ENCODE measurements at regions of chr11 and their contacts with region 1.

Region 1: DNA sequence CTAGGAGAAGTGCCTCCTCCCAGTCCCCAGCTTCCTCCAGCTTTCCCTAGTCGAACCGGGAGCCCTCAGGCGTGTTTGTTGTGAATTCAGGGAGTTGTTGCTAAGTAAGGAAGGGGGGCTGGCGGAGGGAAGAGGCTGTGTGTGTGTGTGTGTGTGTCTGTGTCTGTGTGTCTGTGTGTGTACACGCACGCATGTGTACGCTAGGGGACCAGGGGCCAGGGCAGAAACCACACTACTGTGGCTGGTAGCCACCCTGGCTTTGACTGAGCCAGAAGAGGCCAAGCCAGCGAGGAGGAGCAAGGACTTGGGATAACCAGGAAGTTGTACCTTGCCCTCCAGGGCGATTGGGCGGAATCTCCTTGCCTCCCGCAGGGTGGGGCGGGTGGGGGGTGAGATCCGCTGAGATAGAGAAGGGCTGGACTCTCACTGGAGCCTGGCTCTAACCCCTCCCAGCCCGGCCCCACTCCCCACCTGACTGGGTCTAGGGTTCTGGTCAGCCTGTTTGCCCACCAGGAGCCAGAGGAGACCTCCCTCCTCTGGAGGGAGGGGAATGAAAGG is 7.5 kb downstream of the BCL9L start:
- DNase-seq: peak; percentile 79 to 97
- H3K4me3 ChIP-seq: peak overlapping the region; percentile 54
- H3K27ac ChIP-seq: peak overlapping the region; percentile 96
- H3K4me1 ChIP-seq: peaks cover 77% of the 10 kb centered on the region
- H3K27me3 ChIP-seq: no peaks in the 10 kb centered on the region
- CTCF ChIP-seq: no peak

Region 2: GRCh38 chr11:118892536-118892936 is 25.7 kb before region 1 on chr11:
- CTCF ChIA-PET with region 1: no interaction called
- POLR2A ChIA-PET with region 1: interaction called, 36 read pairs
- intact Hi-C with region 1: no loop called
- DNase-seq: peak; percentile 28 to 54
- H3K4me3 ChIP-seq: no peak overlapping the region
- H3K27ac ChIP-seq: no peak overlapping the region
- H3K4me1 ChIP-seq: peaks cover 22% of the 10 kb centered on the region
- H3K27me3 ChIP-seq: no peaks in the 10 kb centered on the region
- CTCF ChIP-seq: no peak

Region 3: DNA sequence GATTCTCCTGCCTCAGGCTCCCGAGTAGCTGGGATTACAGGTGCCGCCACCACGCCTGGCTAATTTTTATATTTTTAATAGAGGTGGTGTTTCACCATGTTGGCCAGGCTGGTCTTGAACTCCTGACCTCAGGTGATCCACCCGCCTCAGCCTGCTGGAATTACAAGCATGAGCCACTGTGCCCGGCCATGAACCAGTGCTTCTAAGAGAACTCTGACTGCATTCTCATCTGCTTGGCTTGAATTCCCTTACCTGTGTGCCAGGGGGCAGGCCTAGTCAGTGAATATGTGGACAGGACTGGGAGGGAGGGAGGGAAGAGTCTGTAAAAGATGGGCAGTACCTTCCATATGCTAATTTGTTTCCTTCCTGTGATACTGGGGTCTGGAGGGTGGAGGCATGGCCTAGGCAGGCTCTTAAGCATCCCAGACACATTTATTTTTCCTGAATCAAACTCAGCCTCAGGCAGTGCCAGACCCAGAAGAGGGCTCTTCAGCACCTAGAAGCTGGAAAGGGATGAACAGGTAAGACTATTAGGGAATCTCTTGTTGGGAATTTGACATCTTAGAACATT is 93.4 kb after region 1 on chr11:
- CTCF ChIA-PET with region 1: no interaction called
- POLR2A ChIA-PET with region 1: interaction called, 10 read pairs
- intact Hi-C with region 1: no loop called
- DNase-seq: no peak
- H3K4me3 ChIP-seq: no peak overlapping the region
- H3K27ac ChIP-seq: peak overlapping the region; percentile 22; the same call in 1 of the 2 replicates
- H3K4me1 ChIP-seq: peaks cover 13% of the 10 kb centered on the region
- H3K27me3 ChIP-seq: no peaks in the 10 kb centered on the region
- CTCF ChIP-seq: no peak

Measured in PC-9 (cell line).